Posterior cingulate gyrus (tissue), 11 donors: ENCODE measurements at regions of chr20 and their contacts with region 1.

Region 1: DNA sequence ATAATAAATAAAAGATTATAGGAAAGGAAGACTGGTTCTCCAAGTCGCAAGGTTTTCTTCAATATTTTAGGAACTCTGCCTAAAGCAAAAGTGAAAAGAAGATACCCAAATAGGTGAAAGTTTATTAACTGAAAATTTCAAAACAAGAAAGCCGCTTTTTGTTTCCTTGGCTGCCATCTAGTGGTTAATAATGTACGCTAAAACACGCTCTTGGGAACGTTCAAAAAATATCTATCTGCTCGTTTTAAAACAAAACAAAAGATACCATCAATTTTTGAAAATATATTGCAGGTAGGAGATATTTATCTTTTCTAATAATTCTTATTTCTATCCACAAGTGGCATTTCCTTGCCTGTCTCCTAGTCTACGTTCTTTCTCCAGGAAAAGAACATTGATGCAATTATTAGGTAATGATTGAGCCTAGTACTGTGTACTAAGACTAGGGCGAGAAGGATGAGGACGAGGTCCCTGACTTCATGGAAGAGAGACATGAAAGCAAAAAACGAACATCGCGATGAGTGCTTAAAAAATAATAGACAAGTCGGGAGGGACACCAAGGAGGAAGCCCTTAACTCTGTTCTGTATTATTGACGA is 97.2 kb downstream of the SPTLC3 start:
- DNase-seq: no peak

Region 2: GRCh38 chr20:12925214-12925755 is 180.7 kb before region 1 on chr20:
- intact Hi-C with region 1: loop called (anchors 1 kb)
- DNase-seq: peak in 9 of 10 donors; percentile 40 to 93 (median 55)

Region 3: GRCh38 chr20:13221673-13222318 is 115.8 kb after region 1 on chr20:
- intact Hi-C with region 1: no loop called
- DNase-seq: peak in 8 of 10 donors; percentile 25 to 91 (median 48)